ENCODE measurements at regions of chr18 and their contacts with region 1.

Region 1: DNA sequence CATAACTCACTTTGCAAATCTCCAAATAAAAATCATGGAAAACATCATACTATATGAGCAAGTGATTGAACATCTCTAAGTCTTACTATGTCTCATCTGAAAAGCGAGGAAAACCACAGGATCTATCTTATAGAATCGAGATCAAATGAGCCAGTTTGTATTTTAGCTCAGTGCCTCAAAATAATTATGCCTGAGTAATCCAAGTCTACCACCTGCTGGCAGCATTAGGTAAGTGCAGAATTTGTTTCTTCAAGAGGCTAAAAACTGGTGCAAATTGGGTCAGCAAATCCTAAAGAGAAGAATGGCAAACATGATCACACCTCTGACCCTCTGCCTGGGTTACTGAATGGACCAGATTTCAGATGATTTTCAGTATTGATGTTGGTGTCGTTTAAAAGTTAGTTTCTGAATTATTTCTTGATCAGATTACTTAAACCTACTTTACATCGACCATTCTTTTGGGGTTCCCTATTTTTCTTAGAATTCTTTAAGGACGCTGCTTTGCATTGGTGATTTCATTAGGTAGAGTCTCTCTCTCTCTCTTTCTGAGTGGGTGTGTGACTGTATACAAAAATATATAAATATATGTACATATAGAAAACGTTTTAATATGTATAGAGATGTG is 12.7 kb upstream of the FHOD3 start:
- DNase-seq: no peak
- H3K4me3 ChIP-seq: no peak overlapping the region
- CTCF ChIP-seq: peak; percentile 72

Region 2: GRCh38 chr18:36015629-36016028 is 269.2 kb before region 1 on chr18:
- CTCF ChIA-PET with region 1: interaction called, 80 read pairs
- POLR2A ChIA-PET with region 1: no interaction called
- DNase-seq: no peak
- H3K4me3 ChIP-seq: no peak overlapping the region
- CTCF ChIP-seq: no peak

Region 3: GRCh38 chr18:36086186-36086585 is 198.6 kb before region 1 on chr18:
- CTCF ChIA-PET with region 1: interaction called, 13 read pairs
- POLR2A ChIA-PET with region 1: no interaction called
- DNase-seq: no peak
- H3K4me3 ChIP-seq: no peak overlapping the region
- CTCF ChIP-seq: no peak

Region 4: DNA sequence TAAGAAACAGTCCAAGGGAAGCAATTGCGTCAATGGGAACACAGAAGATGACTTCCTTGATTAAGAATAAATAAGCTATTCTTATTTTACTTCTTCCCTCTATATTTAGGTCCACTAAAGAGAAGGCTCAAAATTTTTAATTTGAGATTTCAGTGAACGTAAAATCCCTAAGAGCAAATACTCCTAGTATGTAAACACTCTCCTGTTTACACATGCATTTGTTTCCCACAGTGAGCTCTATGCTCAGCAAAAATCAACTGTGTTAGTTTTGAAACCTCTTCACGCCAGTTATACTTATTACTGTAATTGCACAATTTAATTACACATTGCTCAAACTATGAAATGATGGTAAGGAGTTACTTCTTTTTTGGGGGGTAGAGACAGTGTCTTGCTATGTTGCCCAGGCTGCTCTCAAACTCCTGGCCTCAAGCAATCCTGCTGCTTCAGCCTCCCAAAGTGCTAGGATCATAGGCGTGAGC is 164.4 kb before region 1 on chr18:
- CTCF ChIA-PET with region 1: interaction called, 13 read pairs
- POLR2A ChIA-PET with region 1: no interaction called
- DNase-seq: no peak
- H3K4me3 ChIP-seq: no peak overlapping the region
- CTCF ChIP-seq: no peak

Region 5: DNA sequence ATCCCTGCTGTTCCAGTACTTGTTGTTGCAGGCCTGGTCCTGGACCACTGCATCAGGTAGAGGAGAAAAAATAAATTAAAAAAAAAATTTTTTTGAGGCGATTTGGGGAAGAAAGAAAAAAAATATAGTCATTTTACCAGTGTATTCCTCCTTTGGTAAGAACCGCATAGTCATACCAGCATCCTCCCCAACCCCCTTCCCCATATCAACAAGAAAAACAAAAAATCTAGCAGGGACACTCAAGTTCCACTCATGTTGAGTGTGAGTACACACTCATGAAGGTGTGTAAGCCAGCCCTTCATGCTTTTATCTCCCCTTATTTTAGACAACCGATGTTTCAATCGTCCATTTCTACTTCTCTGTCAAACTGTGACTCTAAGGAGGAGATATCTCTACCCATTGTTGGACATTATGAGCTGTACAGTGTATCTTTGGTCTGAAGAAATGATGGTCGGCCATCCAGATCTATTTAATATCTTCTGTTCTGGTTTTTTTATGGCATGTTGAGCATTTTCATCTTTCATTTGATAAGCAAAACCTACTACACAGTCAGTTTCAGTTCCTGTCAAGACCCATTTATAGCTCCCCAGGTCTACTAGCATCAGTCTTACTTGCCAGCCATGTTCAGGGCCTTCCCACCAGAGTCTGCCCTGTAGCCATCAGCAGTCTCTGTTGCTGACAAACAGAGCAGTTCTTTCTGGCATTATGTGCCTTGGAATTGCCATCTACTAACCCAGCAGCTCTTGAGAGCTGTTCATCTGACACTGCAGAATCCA is 135.1 kb before region 1 on chr18:
- CTCF ChIA-PET with region 1: interaction called, 10 read pairs
- POLR2A ChIA-PET with region 1: no interaction called
- DNase-seq: no peak
- H3K4me3 ChIP-seq: no peak overlapping the region
- CTCF ChIP-seq: no peak

Region 6: GRCh38 chr18:36296650-36297416 is 12.1 kb after region 1 on chr18:
- CTCF ChIA-PET with region 1: interaction called, 17 read pairs
- POLR2A ChIA-PET with region 1: no interaction called
- DNase-seq: no peak
- H3K4me3 ChIP-seq: peak overlapping the region; percentile 62
- CTCF ChIP-seq: peak; percentile 80

Region 7: GRCh38 chr18:37107748-37108522 is 823.2 kb after region 1 on chr18:
- CTCF ChIA-PET with region 1: no interaction called
- POLR2A ChIA-PET with region 1: no interaction called
- DNase-seq: no peak
- H3K4me3 ChIP-seq: no peak overlapping the region
- CTCF ChIP-seq: no peak

Measured in AG04449 (cell line).